ENCODE measurements at regions of chr2 and their contacts with region 1.

Region 1: GRCh38 chr2:28681158-28681571 is 70.5 kb upstream of the PPP1CB start:
- DNase-seq: no peak
- H3K4me3 ChIP-seq: no peak overlapping the region
- H3K27ac ChIP-seq: no peak overlapping the region
- H3K4me1 ChIP-seq: peaks cover 11% of the 10 kb centered on the region
- H3K27me3 ChIP-seq: no peaks in the 10 kb centered on the region
- CTCF ChIP-seq: no peak
- EP300 ChIP-seq: no peak
- POLR2A ChIP-seq: no peak

Region 2: GRCh38 chr2:28544919-28545589 is 136.1 kb before region 1 on chr2:
- intact Hi-C with region 1: no loop called
- DNase-seq: no peak
- H3K4me3 ChIP-seq: no peak overlapping the region
- H3K27ac ChIP-seq: no peak overlapping the region
- H3K4me1 ChIP-seq: no peaks in the 10 kb centered on the region
- H3K27me3 ChIP-seq: no peaks in the 10 kb centered on the region
- CTCF ChIP-seq: no peak
- EP300 ChIP-seq: no peak
- POLR2A ChIP-seq: no peak

Region 3: GRCh38 chr2:28567061-28567471 is 114.1 kb before region 1 on chr2:
- intact Hi-C with region 1: no loop called
- DNase-seq: peak in 2 of 5 donors; percentile 29 to 52
- H3K4me3 ChIP-seq: peak overlapping the region; percentile 34
- H3K27ac ChIP-seq: no peak overlapping the region
- H3K4me1 ChIP-seq: no peaks in the 10 kb centered on the region
- H3K27me3 ChIP-seq: no peaks in the 10 kb centered on the region
- CTCF ChIP-seq: no peak
- EP300 ChIP-seq: no peak
- POLR2A ChIP-seq: no peak

Region 4: GRCh38 chr2:28736034-28736433 is 54.9 kb after region 1 on chr2:
- intact Hi-C with region 1: loop called in 1 of 4 experiments (anchors 10 kb)
- DNase-seq: peak in 3 of 5 donors; percentile 45 to 53 (median 48)
- H3K4me3 ChIP-seq: no peak overlapping the region
- H3K27ac ChIP-seq: no peak overlapping the region
- H3K4me1 ChIP-seq: peaks cover 3% of the 10 kb centered on the region
- H3K27me3 ChIP-seq: no peaks in the 10 kb centered on the region
- CTCF ChIP-seq: no peak
- EP300 ChIP-seq: no peak
- POLR2A ChIP-seq: no peak